HEK293 (cell line): ENCODE measurements at regions of chr19 and their contacts with region 1.

Region 1: DNA sequence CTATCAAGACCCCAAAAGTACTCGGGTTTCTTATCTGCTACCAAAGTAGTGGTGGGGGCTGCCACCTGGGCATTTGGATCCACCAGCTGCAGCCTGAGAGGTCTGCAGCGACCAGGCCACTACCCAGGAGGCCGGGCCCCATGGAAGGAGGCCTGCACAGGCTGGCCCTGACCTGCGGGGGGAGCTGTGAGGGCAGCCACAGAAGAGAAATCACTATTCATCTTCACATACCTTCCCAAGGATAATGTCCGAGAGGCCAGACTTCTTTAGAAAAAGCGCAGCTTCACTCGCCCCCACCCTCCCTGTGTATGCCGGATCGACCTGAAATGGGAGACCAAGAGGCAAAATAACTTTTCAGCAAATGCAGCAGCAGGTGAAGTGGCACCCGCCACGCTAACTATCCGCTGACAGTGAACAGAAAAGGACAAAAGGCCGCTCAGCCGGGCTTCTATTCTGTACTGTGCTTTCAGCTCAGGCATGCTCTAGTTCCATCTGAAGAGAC is 30.1 kb downstream of the EPS15L1 start:
- H3K4me3 ChIP-seq: no peak overlapping the region
- H3K27ac ChIP-seq: no peak overlapping the region
- H3K4me1 ChIP-seq: peaks cover 11% of the 10 kb centered on the region
- CTCF ChIP-seq: no peak; the same call in 1 of the 2 replicates

Region 2: DNA sequence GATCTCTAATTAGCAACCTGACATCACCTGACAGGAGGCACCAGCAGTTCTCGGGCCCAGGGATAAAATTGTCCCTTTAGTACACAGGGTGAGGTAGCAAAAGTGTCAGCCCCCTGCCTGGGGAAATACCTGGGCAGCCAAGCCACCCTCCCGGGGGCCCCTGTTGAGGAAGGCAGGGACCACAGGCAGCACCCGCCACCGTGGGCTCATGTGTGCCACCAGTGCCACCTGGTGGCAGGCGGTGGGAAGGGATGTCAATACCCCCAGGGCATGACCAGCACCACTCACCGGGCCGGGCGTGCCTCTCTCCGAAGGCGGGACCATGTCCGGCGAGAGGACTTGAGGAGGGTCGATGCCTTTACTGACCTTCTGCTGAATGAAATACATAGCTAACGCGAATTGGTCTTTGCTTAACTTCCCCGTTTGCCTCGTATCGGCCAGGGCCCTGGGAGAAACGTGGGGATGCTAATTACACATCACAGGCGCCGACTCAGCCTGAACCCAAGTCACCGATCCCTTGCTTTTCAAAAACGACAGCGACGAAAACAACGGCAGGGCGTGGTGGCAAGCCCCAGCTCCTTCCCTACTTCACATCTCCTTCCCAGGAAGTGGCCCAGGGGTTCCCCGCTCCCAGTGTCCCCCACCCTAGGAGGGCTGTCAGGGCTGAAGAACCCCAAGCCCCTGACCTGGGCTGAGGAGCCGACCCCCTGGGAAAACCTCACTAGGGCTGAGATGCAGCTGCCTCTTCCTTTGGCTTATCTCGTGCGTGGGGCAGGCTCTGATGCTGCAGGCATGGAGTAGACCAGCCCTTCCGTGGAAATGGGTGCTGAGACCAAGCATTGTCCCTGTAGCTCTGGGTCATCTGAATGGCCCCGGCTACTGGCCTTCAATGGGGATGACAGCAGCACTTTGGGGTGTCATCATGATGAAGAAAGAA is 23.8 kb before region 1 on chr19:
- CTCF ChIA-PET with region 1: interaction called, 16 read pairs
- POLR2A ChIA-PET with region 1: no interaction called
- H3K4me3 ChIP-seq: no peak overlapping the region
- H3K27ac ChIP-seq: no peak overlapping the region
- H3K4me1 ChIP-seq: no peaks in the 10 kb centered on the region
- CTCF ChIP-seq: peak; percentile 85

Region 3: GRCh38 chr19:16456652-16457194 is 15.0 kb after region 1 on chr19:
- CTCF ChIA-PET with region 1: interaction called, 20 read pairs
- POLR2A ChIA-PET with region 1: interaction called, 3 read pairs
- H3K4me3 ChIP-seq: no peak overlapping the region
- H3K27ac ChIP-seq: no peak overlapping the region
- H3K4me1 ChIP-seq: peaks cover 7% of the 10 kb centered on the region
- CTCF ChIP-seq: no peak

Region 4: GRCh38 chr19:16462757-16463250 is 21.1 kb after region 1 on chr19:
- CTCF ChIA-PET with region 1: interaction called, 16 read pairs
- POLR2A ChIA-PET with region 1: interaction called, 3 read pairs
- H3K4me3 ChIP-seq: no peak overlapping the region
- H3K27ac ChIP-seq: no peak overlapping the region
- H3K4me1 ChIP-seq: peaks cover under 1% of the 10 kb centered on the region; the same call in 1 of the 2 replicates
- CTCF ChIP-seq: no peak

Region 5: DNA sequence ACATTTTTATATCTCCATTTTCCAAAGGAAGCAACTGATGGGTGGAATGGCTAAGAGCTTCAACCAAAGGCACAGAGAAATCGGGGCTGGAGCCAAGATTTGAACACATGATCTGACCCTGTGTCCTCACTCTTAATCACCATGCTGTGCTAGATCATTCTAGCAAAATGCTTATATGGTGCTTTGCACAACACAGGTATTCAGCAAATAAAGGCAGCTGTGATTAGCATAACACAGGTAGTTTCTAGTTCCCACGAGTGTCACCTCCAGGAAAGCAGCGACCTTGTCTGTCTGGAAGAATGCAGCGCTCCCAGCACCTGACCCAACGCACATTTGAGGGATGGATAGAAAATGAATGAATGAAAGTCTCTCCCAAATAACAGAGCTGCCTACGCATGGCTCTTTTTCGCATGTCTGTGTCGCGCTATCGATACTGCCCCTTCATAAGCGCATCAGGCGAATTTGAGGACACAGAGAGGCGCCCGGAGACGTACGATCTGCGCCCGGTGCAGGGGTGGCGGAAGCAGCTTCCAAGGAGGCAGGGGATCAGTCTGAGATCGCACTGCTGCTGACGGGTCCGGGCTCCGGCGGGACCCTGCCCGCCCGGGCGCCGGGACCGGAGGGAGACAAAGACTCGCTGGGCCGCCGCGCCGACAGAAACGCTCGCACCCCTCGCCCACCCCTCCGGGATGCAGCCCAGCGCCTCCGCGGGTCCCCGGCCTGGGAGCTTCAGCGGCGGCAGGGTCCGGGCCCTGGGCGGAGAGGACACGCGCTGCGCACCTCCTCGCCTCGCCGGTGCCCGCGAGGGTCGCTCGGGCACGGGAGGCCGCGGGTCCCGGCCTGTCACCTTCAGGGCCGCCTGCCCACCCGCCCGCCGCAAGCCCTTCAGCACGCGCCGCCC is 29.4 kb after region 1 on chr19:
- CTCF ChIA-PET with region 1: interaction called, 10 read pairs
- POLR2A ChIA-PET with region 1: interaction called, 4 read pairs
- H3K4me3 ChIP-seq: peak overlapping the region; percentile 77
- H3K27ac ChIP-seq: peak overlapping the region; percentile 55; the same call in 1 of the 2 replicates
- H3K4me1 ChIP-seq: no peaks in the 10 kb centered on the region
- CTCF ChIP-seq: no peak

Region 6: GRCh38 chr19:16516923-16517610 is 75.4 kb after region 1 on chr19:
- CTCF ChIA-PET with region 1: interaction called, 13 read pairs
- POLR2A ChIA-PET with region 1: no interaction called
- H3K4me3 ChIP-seq: no peak overlapping the region
- H3K27ac ChIP-seq: no peak overlapping the region
- H3K4me1 ChIP-seq: no peaks in the 10 kb centered on the region
- CTCF ChIP-seq: no peak